ENCODE measurements at regions of chr21 and their contacts with region 1.

Region 1: GRCh38 chr21:33199516-33200217 is 30.1 kb upstream of the IFNAR2 start:
- DNase-seq: peak; percentile 87
- H3K4me3 ChIP-seq: no peak overlapping the region
- H3K27ac ChIP-seq: no peak overlapping the region
- H3K4me1 ChIP-seq: no peaks in the 10 kb centered on the region
- H3K27me3 ChIP-seq: no peaks in the 10 kb centered on the region
- CTCF ChIP-seq: peak; percentile 53 to 91 (median 80)
- POLR2A ChIP-seq: no peak

Region 2: GRCh38 chr21:32834916-32835235 is 364.8 kb before region 1 on chr21:
- intact Hi-C with region 1: loop called (anchors 5 kb)
- DNase-seq: no peak
- H3K4me3 ChIP-seq: no peak overlapping the region
- H3K27ac ChIP-seq: no peak overlapping the region
- H3K4me1 ChIP-seq: no peaks in the 10 kb centered on the region
- H3K27me3 ChIP-seq: no peaks in the 10 kb centered on the region
- CTCF ChIP-seq: no peak
- POLR2A ChIP-seq: no peak

Region 3: GRCh38 chr21:32940079-32941014 is 259.3 kb before region 1 on chr21:
- intact Hi-C with region 1: loop called (anchors 10 kb)
- DNase-seq: peak; percentile 53
- H3K4me3 ChIP-seq: no peak overlapping the region
- H3K27ac ChIP-seq: no peak overlapping the region
- H3K4me1 ChIP-seq: no peaks in the 10 kb centered on the region
- H3K27me3 ChIP-seq: peaks cover 3% of the 10 kb centered on the region
- CTCF ChIP-seq: peak; percentile 49 to 72 (median 68)
- POLR2A ChIP-seq: no peak

Region 4: GRCh38 chr21:32958288-32959002 is 241.2 kb before region 1 on chr21:
- intact Hi-C with region 1: no loop called
- DNase-seq: no peak
- H3K4me3 ChIP-seq: no peak overlapping the region
- H3K27ac ChIP-seq: no peak overlapping the region
- H3K4me1 ChIP-seq: no peaks in the 10 kb centered on the region
- H3K27me3 ChIP-seq: peaks cover 6% of the 10 kb centered on the region
- CTCF ChIP-seq: no peak
- POLR2A ChIP-seq: no peak

Region 5: GRCh38 chr21:33019885-33020557 is 179.6 kb before region 1 on chr21:
- intact Hi-C with region 1: no loop called
- DNase-seq: no peak
- H3K4me3 ChIP-seq: no peak overlapping the region
- H3K27ac ChIP-seq: no peak overlapping the region
- H3K4me1 ChIP-seq: no peaks in the 10 kb centered on the region
- H3K27me3 ChIP-seq: peaks cover 44% of the 10 kb centered on the region
- CTCF ChIP-seq: no peak
- POLR2A ChIP-seq: no peak

Region 6: DNA sequence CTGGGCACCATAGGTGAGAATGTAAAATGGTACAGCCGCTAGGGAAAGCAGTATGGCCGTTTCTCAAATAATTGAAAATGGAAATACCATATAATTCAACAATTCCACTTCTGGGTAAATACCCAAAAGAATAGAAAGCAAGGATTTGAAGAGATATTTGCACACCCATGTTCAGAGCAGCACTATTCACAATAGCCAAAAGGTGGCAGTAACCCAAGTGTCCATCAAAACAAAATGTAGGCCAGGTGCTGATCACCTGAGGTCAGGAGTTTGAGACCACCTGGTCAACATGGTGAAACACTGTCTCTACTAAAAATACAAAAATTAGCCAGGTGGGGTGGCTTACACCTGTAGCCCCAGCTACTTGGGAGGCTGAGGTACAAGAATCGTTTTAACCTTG is 67.6 kb before region 1 on chr21:
- intact Hi-C with region 1: no loop called
- DNase-seq: no peak
- H3K4me3 ChIP-seq: no peak overlapping the region
- H3K27ac ChIP-seq: no peak overlapping the region
- H3K4me1 ChIP-seq: no peaks in the 10 kb centered on the region
- H3K27me3 ChIP-seq: peaks cover 4% of the 10 kb centered on the region
- CTCF ChIP-seq: no peak
- POLR2A ChIP-seq: no peak

Region 7: GRCh38 chr21:33324291-33325221 is 124.9 kb after region 1 on chr21 and contains the start of gene IFNAR1:
- intact Hi-C with region 1: loop called (anchors 10 kb)
- DNase-seq: peak; percentile 97
- H3K4me3 ChIP-seq: peak within 1 kb of the TSS; percentile 97 to 98
- H3K27ac ChIP-seq: peak within 1 kb of the TSS; percentile 98 to 99
- H3K4me1 ChIP-seq: no peaks in the 10 kb centered on the region
- H3K27me3 ChIP-seq: no peaks in the 10 kb centered on the region
- CTCF ChIP-seq: peak in 1 of 4 experiments; percentile 31
- POLR2A ChIP-seq: peak; percentile 96
- total RNA-seq, gene IFNAR1: 29.8 to 34.4 TPM

Region 8: GRCh38 chr21:33360881-33361602 is 161.4 kb after region 1 on chr21:
- intact Hi-C with region 1: loop called (anchors 5 kb)
- DNase-seq: peak; percentile 71
- H3K4me3 ChIP-seq: peak overlapping the region in 1 of 2 donors; percentile 1
- H3K27ac ChIP-seq: peak overlapping the region in 1 of 2 donors; percentile 30
- H3K4me1 ChIP-seq: no peaks in the 10 kb centered on the region
- H3K27me3 ChIP-seq: no peaks in the 10 kb centered on the region
- CTCF ChIP-seq: peak; percentile 62 to 82 (median 76)
- POLR2A ChIP-seq: no peak

Region 9: GRCh38 chr21:33444499-33444898 is 244.8 kb after region 1 on chr21:
- intact Hi-C with region 1: loop called (anchors 2 kb)
- DNase-seq: no peak
- H3K4me3 ChIP-seq: no peak overlapping the region
- H3K27ac ChIP-seq: no peak overlapping the region
- H3K4me1 ChIP-seq: no peaks in the 10 kb centered on the region
- H3K27me3 ChIP-seq: no peaks in the 10 kb centered on the region
- CTCF ChIP-seq: no peak
- POLR2A ChIP-seq: no peak

Region 10: GRCh38 chr21:33608559-33608958 is 408.9 kb after region 1 on chr21:
- intact Hi-C with region 1: loop called (anchors 5 kb)
- DNase-seq: no peak
- H3K4me3 ChIP-seq: no peak overlapping the region
- H3K27ac ChIP-seq: no peak overlapping the region
- H3K4me1 ChIP-seq: no peaks in the 10 kb centered on the region
- H3K27me3 ChIP-seq: no peaks in the 10 kb centered on the region
- CTCF ChIP-seq: no peak
- POLR2A ChIP-seq: no peak